GM12878 (cell line): ENCODE measurements at regions of chr14 and their contacts with region 1.

Region 1: DNA sequence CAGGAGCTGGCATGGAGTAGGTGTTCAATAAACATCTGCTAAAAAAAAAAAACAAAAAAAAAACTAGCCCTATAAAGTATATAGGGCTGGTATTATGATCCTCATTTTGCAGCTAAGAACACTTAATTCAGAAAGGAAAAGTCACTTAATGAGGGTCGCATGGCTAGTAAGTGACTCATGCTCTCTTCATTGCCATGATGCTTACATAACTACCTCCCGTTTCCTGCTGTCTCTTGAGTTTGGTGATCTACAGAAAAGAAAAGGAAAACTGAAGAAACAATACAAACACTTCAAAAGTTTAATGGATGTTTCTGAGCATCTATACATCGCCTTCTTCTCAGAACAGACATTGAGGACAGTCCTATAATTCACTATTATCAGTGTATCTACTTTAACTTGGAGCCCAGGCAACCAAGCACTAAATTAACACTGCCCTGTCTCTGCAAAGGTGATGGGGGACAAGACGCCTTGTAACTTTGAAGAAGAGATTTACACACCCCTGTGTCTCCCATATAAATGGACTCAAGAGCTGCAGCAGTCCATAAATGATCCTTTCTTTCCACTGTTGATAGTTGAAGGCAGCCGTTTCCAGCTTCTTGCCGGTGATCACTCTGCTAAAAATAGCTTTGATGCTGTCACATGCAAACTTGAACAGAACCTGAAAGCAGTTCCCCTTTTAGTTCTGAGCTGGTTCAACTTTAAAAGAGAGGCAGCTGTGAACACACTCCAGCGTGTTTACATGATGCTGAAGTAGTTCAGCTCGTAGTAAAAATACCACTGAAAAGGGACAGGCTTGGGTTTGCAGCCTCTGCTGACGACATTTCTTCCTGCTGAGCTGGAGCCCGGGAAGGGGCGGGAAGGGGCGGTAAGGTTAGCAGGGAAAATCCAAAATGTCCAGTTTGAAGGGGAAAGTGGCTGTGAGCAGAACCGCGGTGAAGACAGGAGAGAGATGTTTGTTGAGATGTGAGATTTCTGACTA is 113.3 kb downstream of the FOXN3 start:
- DNase-seq: peak; percentile 76
- ATAC-seq: peak; percentile 82
- H3K4me3 ChIP-seq: peak overlapping the region; percentile 51
- H3K27ac ChIP-seq: peak overlapping the region; percentile 98
- H3K4me1 ChIP-seq: peaks cover 59% of the 10 kb centered on the region
- H3K27me3 ChIP-seq: no peaks in the 10 kb centered on the region
- CTCF ChIP-seq: no peak
- EP300 ChIP-seq: peak; percentile 59 to 63
- POLR2A ChIP-seq: peak; percentile 70
- RAD21 ChIP-seq: 0 out of 2 replicates have a peak, but pooled peaks have one; percentile 2

Region 2: GRCh38 chr14:89178802-89179535 is 124.8 kb before region 1 on chr14:
- CTCF ChIA-PET with region 1: interaction called, 3 read pairs
- POLR2A ChIA-PET with region 1: no interaction called
- RAD21 ChIA-PET with region 1: interaction called, 22 read pairs
- SMC1A ChIA-PET with region 1: interaction called, 11 read pairs
- in situ Hi-C with region 1: no loop called
- intact Hi-C with region 1: no loop called
- DNase-seq: no peak
- ATAC-seq: no peak
- H3K4me3 ChIP-seq: no peak overlapping the region
- H3K27ac ChIP-seq: no peak overlapping the region
- H3K4me1 ChIP-seq: peaks cover 8% of the 10 kb centered on the region
- H3K27me3 ChIP-seq: no peaks in the 10 kb centered on the region
- CTCF ChIP-seq: no peak
- EP300 ChIP-seq: no peak
- POLR2A ChIP-seq: no peak
- RAD21 ChIP-seq: no peak

Region 3: DNA sequence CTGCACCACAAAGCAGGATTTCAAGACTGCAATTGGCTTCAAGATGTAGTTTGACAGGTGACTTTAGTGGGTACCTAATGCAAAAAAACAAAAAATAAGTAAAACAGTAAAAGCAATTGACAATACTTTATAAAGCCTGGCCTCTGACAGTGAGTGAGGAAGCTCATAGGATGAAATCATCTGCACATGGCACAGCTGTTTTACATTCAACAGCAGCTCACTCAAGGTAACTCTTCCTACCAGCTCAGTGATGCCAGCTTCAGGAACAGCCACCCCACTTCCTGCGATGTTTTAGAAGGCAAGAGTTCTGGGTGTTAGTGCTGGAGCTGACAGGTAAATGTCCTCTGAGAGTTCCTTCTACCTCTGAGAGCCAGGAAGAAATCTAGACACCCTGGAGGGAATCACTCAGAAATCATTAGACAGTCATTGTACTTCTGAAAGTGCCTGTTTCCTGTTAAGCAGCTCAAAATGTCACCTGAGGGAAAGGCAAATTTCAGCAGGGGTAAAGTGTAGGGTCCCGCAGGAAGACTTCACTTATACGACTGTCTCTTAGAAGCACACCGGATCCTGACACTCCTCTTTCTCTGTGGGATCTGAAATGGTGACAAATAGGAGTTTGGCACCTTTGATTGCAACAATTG is 13.4 kb after region 1 on chr14:
- CTCF ChIA-PET with region 1: interaction called, 4 read pairs
- POLR2A ChIA-PET with region 1: interaction called, 5 read pairs
- RAD21 ChIA-PET with region 1: interaction called, 13 read pairs
- SMC1A ChIA-PET with region 1: interaction called, 67 read pairs
- in situ Hi-C with region 1: no loop called
- intact Hi-C with region 1: no loop called
- DNase-seq: no peak
- ATAC-seq: peak; percentile 88
- H3K4me3 ChIP-seq: peak overlapping the region; percentile 22; the same call in 1 of the 2 replicates
- H3K27ac ChIP-seq: peak overlapping the region; percentile 71
- H3K4me1 ChIP-seq: peaks cover 14% of the 10 kb centered on the region
- H3K27me3 ChIP-seq: no peaks in the 10 kb centered on the region; a peak in 1 of 4 replicates
- CTCF ChIP-seq: no peak
- EP300 ChIP-seq: no peak
- POLR2A ChIP-seq: no peak
- RAD21 ChIP-seq: no peak

Region 4: GRCh38 chr14:89336338-89336737 is 32.6 kb after region 1 on chr14:
- CTCF ChIA-PET with region 1: interaction called, 6 read pairs
- POLR2A ChIA-PET with region 1: interaction called, 4 read pairs
- RAD21 ChIA-PET with region 1: interaction called, 20 read pairs
- SMC1A ChIA-PET with region 1: interaction called, 15 read pairs
- in situ Hi-C with region 1: no loop called
- intact Hi-C with region 1: loop called (anchors 2 kb)
- DNase-seq: no peak
- ATAC-seq: peak; percentile 62
- H3K4me3 ChIP-seq: no peak overlapping the region
- H3K27ac ChIP-seq: no peak overlapping the region
- H3K4me1 ChIP-seq: peaks cover 59% of the 10 kb centered on the region
- H3K27me3 ChIP-seq: no peaks in the 10 kb centered on the region
- CTCF ChIP-seq: peak; percentile 8 to 35 (median 21); a peak in 4 of 6 replicates
- EP300 ChIP-seq: no peak
- POLR2A ChIP-seq: no peak
- RAD21 ChIP-seq: peak; percentile 69

Region 5: DNA sequence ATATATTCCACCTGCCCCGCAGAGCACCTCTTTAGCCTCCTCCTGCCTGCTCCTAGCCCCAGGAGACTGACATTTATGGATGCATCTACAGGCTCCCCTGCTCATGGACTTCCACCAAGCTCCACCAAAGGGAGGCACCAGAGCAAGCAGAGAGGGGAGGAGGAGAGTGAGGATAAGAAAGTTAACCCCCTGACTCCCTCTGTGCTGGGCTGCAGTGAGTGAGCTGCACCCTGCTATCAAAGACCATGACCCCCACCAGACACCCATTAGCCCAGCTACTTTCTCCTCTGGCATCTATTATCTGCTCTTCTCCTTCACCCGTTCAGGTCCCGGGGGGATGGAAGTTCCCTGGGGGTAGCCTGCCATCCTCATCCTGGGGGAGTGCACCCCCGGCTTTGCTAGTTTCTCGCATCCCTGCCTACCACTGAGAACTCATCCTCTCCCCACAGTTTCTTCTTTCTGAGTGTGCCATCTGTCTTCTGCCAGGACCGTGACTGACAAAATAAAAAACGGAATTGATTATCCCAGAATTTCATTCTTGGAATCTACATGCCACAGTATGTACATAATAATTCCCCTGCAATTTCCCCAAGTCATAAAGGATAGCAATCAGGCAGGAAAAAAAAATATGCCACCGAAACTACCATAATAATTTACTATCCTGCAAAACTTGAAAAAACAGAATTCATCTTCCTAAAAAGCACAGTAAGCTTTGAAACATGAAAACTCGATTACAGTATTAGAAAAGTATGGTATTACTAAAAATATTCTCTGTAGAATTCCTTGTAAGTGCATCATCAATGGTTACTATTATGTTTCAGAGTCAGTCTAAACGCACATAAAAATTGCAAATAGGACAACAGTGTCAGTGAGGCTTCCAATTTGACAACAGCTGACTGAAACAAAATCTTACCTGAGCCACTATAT is 68.1 kb after region 1 on chr14:
- CTCF ChIA-PET with region 1: interaction called, 3 read pairs
- POLR2A ChIA-PET with region 1: interaction called, 4 read pairs
- RAD21 ChIA-PET with region 1: interaction called, 17 read pairs
- SMC1A ChIA-PET with region 1: interaction called, 56 read pairs
- in situ Hi-C with region 1: no loop called
- intact Hi-C with region 1: no loop called
- DNase-seq: no peak
- ATAC-seq: peak; percentile 32
- H3K4me3 ChIP-seq: no peak overlapping the region
- H3K27ac ChIP-seq: peak overlapping the region; percentile 40; the same call in 1 of the 2 replicates
- H3K4me1 ChIP-seq: peaks cover 20% of the 10 kb centered on the region
- H3K27me3 ChIP-seq: no peaks in the 10 kb centered on the region
- CTCF ChIP-seq: no peak
- EP300 ChIP-seq: no peak
- POLR2A ChIP-seq: no peak
- RAD21 ChIP-seq: no peak; the same call in 1 of the 2 replicates

Region 6: DNA sequence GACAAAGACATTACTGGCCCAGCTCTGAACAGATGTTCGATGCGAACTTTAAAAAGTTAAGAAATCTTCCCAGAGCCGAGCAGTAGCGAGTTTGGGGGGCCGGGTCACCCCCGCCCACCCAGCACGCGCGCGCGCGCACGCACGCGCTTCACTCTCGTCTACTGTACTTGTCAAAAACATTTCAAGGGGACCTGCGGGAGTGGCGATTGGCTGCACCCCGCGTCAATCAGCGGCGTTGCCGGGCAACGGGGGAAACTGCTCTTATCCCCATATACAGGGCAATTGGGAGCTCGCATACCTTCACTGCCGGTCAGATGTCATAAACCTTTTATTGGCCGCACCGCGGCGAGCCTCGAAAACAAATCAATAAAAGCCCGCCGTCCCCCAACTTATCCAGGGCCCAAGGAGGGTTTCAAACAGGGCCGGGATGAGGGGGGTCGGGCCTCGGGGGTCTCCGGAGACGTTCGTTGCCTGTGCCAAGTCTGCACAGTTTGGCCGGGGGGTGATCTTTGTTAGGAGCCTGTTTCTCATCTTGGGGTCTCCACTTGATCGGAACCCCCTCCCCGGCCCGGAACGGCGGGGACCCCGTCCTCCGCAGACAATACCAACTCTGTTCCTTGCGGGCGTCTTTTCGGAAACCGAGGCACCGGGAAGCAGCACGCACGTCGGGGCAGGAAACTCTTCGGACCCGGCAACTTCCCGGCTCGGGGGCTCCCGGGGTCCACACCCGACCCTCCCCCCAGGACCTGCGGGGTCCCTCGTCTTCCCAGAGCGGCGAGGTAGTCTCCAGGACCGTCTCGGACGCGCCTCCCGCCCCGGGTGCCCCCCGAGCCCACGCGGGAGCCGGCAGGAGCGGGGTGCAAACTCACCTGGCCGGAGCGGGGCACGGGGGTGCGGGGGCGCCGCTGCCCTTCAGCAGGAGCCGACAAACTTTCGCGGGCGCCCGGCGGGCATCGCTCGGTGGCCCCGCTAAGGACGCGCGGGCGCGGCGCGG is 112.6 kb after region 1 on chr14:
- CTCF ChIA-PET with region 1: interaction called, 4 read pairs
- POLR2A ChIA-PET with region 1: interaction called, 9 read pairs
- RAD21 ChIA-PET with region 1: interaction called, 10 read pairs
- SMC1A ChIA-PET with region 1: interaction called, 12 read pairs
- in situ Hi-C with region 1: no loop called
- intact Hi-C with region 1: loop called (anchors 2 kb)
- DNase-seq: peak; percentile 94
- ATAC-seq: peak; percentile 85
- H3K4me3 ChIP-seq: peak overlapping the region; percentile 85
- H3K27ac ChIP-seq: peak overlapping the region; percentile 91
- H3K4me1 ChIP-seq: peaks cover 6% of the 10 kb centered on the region
- H3K27me3 ChIP-seq: no peaks in the 10 kb centered on the region
- CTCF ChIP-seq: no peak
- EP300 ChIP-seq: no peak
- POLR2A ChIP-seq: peak; percentile 31; the same call in 1 of the 2 replicates
- RAD21 ChIP-seq: no peak